Endothelial cell of umbilical vein (primary cell): ENCODE measurements at regions of chr12 and their contacts with region 1.

Region 1: GRCh38 chr12:93569656-93570551 is 2.6 kb upstream of the SOCS2 start:
- DNase-seq: peak; percentile 74
- H3K4me3 ChIP-seq: peak overlapping the region; percentile 35 to 71 (median 68)
- H3K27ac ChIP-seq: no peak overlapping the region
- H3K4me1 ChIP-seq: peaks cover 24% of the 10 kb centered on the region
- H3K27me3 ChIP-seq: peaks cover 30 to 37% of the 10 kb centered on the region in 2 experiments
- CTCF ChIP-seq: peak; percentile 54 to 91
- POLR2A ChIP-seq: no peak

Region 2: DNA sequence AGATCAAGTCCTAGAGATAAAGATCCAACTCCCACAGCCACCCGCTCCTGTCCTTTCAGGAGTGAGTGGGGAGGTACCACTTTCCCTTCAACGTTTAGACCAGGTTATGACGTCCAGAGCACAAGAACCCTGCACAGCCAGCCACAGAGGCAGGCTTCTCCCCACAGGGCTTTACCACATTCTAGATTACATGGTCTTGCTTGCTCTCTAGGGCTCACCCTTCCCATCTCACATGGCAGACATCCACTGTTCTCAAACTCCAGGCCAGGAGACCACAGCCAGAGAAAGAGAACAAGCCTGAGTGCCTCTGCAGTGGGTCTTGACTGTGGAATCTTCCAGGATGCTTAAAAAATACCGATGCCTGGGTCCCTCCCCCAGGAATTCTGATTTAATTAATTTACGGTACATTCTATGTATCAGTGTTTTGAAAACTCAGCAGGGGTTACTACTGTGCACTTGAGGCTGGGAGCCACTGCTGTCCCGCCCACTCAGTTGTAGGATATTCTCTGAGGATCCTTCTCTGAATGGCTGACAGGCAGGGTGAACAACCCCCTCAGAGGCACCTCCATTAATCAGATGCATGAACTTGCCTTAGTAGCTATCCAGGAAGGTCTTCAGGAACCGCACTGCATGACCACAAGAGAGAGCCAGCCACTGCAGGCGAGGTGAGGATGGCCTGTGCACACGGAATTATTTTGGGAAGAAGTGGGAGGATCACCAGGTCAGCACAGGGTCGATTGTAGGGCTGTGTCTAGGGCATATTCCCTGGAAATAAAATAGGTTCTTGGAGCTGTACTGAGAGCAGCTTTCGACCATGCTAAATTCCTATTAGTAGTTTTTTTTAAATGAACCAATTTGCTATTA is 18.9 kb before region 1 on chr12:
- CTCF ChIA-PET with region 1: no interaction called
- POLR2A ChIA-PET with region 1: no interaction called
- dilution Hi-C with region 1: no loop called
- intact Hi-C with region 1: no loop called
- DNase-seq: no peak
- H3K4me3 ChIP-seq: no peak overlapping the region
- H3K27ac ChIP-seq: no peak overlapping the region
- H3K4me1 ChIP-seq: no peaks in the 10 kb centered on the region
- H3K27me3 ChIP-seq: no peaks in the 10 kb centered on the region
- CTCF ChIP-seq: no peak
- POLR2A ChIP-seq: no peak

Region 3: GRCh38 chr12:93591137-93591868 is 21.4 kb after region 1 on chr12:
- CTCF ChIA-PET with region 1: interaction called, 10 read pairs
- POLR2A ChIA-PET with region 1: interaction called, 7 read pairs
- dilution Hi-C with region 1: no loop called
- intact Hi-C with region 1: loop called (anchors 1 kb)
- DNase-seq: peak; percentile 47
- H3K4me3 ChIP-seq: peak overlapping the region; percentile 40 to 79 (median 50)
- H3K27ac ChIP-seq: no peak overlapping the region
- H3K4me1 ChIP-seq: no peaks in the 10 kb centered on the region
- H3K27me3 ChIP-seq: no peaks in the 10 kb centered on the region
- CTCF ChIP-seq: no peak
- POLR2A ChIP-seq: no peak

Region 4: DNA sequence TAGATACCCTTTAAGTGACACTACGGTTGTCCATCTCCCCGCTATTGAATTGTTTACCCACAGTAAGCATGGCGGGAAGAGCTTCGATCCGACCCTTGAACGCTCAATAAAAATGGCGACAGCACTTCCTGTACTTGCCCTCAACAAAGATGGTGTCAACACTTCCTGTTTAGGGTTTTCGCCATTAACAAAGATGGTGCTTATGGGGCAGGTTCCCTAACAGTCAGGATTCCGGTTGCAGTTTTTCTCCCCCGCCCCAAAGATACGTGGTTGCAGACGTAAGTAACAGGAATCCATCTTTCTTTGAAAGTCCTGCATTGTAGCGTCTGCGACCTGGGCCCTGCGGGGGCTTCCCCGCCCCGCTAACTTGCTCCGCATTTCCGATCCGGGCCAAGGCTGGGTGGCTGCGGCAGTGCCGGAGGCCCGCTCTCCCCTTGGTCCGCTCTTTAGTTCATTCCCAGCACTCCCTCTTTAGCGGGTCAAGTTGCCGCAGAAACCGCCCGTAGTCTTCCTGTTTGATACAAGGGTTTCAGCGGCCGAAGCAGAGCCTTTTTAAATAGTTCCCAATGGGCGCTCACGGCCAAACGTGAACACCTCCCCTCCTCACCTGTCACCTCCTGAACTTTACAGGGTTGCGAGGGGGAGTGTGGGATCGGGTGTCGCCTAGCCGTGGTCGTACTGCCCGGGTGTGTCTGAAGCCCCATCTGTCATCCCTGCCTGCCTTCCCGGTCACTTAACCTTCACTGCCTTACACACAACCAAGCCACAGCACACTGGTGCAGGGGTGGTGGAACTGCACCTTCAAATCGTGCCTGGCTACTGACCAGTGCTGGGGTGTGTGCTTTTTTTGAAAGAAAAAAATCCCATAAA is 107.5 kb after region 1 on chr12 and contains the start of gene CRADD:
- CTCF ChIA-PET with region 1: interaction called, 5 read pairs
- POLR2A ChIA-PET with region 1: no interaction called
- dilution Hi-C with region 1: no loop called
- intact Hi-C with region 1: loop called (anchors 1 kb)
- DNase-seq: peak; percentile 97
- H3K4me3 ChIP-seq: peak within 1 kb of the TSS; percentile 43 to 68 (median 67)
- H3K27ac ChIP-seq: peak within 1 kb of the TSS; percentile 82
- H3K4me1 ChIP-seq: peaks cover 10% of the 10 kb centered on the region
- H3K27me3 ChIP-seq: peaks cover 1 to 7% of the 10 kb centered on the region in 2 experiments
- CTCF ChIP-seq: no peak
- POLR2A ChIP-seq: peak; percentile 73
- total RNA-seq, gene CRADD: 8.0 and 11.7 TPM in 2 replicates

Region 5: DNA sequence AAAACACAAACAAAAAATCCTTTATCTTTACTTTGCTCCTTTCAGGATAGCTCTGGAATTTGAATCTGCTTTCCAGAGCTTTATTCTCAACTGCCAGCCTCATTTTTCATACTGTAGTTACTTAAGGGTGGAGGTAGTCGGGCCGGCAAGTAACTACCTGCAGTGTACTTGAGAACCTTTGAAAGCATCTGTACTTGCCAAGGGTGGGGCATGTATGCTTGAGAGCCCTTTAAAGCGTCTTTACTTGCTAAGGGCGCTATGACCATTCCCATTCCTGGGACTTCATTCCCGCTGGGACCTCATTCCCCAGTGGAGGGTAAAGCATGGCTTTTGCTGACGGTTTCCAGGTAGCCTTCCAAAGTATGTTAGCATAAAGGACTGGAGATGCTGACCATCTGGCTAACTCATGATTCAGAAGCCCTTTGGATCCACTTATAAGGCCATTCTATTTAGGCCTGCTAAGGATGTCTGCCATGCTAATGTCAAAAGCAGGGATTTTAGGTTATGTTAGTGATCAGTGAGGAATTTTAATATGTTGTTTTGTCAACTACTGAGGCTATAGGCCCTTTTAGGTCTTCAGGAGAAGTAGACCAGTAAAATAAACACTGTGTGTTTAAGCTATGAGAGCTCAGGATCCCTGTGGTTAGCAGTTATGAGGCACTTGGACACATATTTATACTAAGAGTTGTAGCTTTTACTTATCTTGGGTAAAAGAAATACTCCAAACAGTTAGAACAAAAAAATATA is 182.1 kb after region 1 on chr12:
- CTCF ChIA-PET with region 1: no interaction called
- POLR2A ChIA-PET with region 1: no interaction called
- dilution Hi-C with region 1: no loop called
- intact Hi-C with region 1: no loop called
- DNase-seq: no peak
- H3K4me3 ChIP-seq: no peak overlapping the region
- H3K27ac ChIP-seq: no peak overlapping the region
- H3K4me1 ChIP-seq: peaks cover 4% of the 10 kb centered on the region
- H3K27me3 ChIP-seq: no peaks in the 10 kb centered on the region
- CTCF ChIP-seq: no peak
- POLR2A ChIP-seq: no peak

Region 6: DNA sequence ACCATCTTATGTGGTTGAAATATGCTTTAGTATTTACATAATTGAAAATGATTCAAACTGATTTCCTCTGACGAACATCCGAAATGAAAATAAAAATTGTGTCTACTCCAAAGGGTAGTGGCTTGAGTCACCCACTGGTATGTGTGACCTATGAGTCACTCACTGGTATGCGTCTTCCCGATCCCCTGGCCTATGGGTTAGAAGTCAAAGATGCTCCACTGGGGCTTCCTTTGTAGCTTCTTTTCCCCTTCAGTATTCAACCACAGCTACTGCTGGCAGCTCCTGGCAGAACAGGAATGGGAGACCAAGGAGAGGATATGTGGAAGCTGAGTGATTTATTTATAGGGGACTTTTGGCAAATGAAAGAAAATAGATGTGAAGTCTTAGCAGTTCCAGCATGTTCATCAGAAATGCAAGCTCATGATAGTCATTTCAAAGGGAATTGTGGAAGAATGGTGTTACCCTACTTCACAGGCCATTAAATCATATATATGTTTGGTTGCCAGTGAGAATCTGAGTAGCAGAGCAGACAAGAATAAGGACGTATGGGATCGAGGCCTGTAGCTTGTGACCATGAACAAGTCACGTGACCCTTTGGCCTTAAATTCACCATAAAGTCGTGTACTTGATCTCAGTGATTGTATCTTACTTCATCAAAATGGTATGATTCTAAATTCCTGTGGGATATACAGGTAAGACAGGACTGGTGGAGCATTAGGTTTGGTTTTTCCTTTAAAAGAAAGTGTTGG is 215.5 kb after region 1 on chr12:
- CTCF ChIA-PET with region 1: interaction called, 3 read pairs
- POLR2A ChIA-PET with region 1: no interaction called
- dilution Hi-C with region 1: no loop called
- intact Hi-C with region 1: loop called (anchors 2 kb)
- DNase-seq: peak; percentile 90
- H3K4me3 ChIP-seq: no peak overlapping the region
- H3K27ac ChIP-seq: peak overlapping the region; percentile 99
- H3K4me1 ChIP-seq: peaks cover 44% of the 10 kb centered on the region
- H3K27me3 ChIP-seq: no peaks in the 10 kb centered on the region
- CTCF ChIP-seq: no peak
- POLR2A ChIP-seq: peak; percentile 36

Region 7: DNA sequence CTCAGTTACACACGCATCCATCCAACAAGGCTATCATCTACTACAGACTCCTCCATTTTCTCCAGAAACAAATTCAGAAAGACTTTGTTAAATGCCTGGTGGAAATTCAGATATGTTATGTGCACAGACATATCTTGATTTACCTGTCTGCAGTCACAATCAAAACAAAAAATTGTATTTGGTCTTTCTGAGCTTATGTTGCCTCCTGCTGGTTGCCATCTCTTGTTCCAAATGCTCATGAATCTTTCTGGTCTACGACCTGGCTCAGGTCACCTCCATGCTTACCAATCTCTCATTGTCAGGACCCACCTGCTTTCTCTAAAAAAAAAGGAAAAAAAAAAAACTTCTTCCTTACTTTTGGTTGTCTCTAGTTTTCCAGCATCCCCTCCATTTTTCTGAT is 409.3 kb after region 1 on chr12:
- CTCF ChIA-PET with region 1: interaction called, 27 read pairs
- POLR2A ChIA-PET with region 1: interaction called, 6 read pairs
- dilution Hi-C with region 1: no loop called
- intact Hi-C with region 1: loop called (anchors 1 kb)
- DNase-seq: peak; percentile 43
- H3K4me3 ChIP-seq: no peak overlapping the region
- H3K27ac ChIP-seq: no peak overlapping the region
- H3K4me1 ChIP-seq: no peaks in the 10 kb centered on the region
- H3K27me3 ChIP-seq: peaks cover 3 to 9% of the 10 kb centered on the region in 2 experiments
- CTCF ChIP-seq: peak; percentile 26 to 48
- POLR2A ChIP-seq: no peak